ENCODE measurements at regions of chr3 and their contacts with region 1.

Region 1: DNA sequence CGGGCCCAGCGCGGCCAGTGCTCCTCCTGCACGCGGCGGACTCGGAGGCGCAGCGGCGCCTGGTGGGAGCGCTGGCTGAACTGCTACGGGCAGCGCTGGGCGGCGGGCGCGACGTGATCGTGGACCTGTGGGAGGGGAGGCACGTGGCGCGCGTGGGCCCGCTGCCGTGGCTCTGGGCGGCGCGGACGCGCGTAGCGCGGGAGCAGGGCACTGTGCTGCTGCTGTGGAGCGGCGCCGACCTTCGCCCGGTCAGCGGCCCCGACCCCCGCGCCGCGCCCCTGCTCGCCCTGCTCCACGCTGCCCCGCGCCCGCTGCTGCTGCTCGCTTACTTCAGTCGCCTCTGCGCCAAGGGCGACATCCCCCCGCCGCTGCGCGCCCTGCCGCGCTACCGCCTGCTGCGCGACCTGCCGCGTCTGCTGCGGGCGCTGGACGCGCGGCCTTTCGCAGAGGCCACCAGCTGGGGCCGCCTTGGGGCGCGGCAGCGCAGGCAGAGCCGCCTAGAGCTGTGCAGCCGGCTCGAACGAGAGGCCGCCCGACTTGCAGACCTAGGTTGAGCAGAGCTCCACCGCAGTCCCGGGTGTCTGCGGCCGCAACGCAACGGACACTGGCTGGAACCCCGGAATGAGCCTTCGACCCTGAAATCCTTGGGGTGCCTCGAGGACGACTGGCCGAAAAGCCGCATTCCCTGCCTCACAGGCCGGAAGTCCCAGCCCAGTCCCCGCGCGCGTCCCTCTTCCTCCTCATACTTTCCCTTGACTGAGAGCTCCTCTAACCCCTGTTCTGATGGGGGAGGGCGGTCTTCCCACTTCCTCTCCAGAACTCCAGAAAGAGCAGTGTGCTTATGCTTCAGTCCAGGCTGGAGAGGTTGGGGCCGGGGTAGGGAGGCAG is 1.4 kb upstream of the IL17RC start:
- DNase-seq: peak; percentile 36
- ATAC-seq: peak; percentile 61
- H3K4me3 Mint-ChIP-seq: peak overlapping the region; percentile 64
- H3K27ac Mint-ChIP-seq: no peak overlapping the region
- H3K4me1 Mint-ChIP-seq: peaks cover 20% of the 10 kb centered on the region
- H3K27me3 Mint-ChIP-seq: peaks cover 6% of the 10 kb centered on the region

Region 2: GRCh38 chr3:9837701-9838582 is 77.6 kb before region 1 on chr3:
- CTCF ChIA-PET with region 1: no interaction called
- POLR2A ChIA-PET with region 1: no interaction called
- DNase-seq: no peak
- ATAC-seq: no peak
- H3K4me3 Mint-ChIP-seq: no peak overlapping the region
- H3K27ac Mint-ChIP-seq: no peak overlapping the region
- H3K4me1 Mint-ChIP-seq: peaks cover 10% of the 10 kb centered on the region
- H3K27me3 Mint-ChIP-seq: no peaks in the 10 kb centered on the region

Region 3: DNA sequence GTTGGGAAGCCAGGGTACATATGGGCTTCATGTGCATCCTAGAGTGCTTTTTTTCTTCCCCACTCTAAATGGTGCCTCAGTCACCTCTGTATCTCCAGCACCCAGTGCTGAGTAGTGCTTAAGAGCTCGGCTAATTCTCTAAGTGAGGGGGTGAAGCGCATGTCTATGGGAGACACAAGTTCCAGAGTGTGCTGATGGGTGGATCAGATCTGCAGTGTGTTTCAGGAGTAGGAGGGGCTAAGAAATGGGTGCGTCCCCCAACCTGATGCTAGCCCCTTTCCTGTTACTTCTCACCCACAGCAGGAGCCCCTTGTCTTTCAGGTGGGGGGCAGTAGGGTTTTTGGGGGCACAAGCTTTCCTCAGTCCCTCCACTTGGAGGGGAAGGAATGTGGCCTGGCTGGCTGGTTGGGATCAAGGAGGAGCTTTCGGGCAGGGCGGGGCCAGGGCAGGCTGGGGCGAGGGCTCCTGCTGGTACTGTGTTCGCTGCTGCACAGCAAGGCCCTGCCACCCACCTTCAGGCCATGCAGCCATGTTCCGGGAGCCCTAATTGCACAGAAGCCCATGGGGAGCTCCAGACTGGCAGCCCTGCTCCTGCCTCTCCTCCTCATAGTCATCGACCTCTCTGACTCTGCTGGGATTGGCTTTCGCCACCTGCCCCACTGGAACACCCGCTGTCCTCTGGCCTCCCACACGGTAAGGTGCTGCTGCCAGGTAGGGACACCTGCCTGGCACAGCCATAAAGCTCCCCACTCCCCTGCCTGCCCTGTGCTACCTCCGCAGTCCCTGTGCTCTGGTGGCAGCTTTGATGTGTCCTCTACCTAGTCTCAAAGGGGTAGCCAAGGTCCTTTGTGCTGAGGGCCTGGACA is 12.9 kb before region 1 on chr3 and contains the start of gene IL17RE:
- CTCF ChIA-PET with region 1: interaction called, 11 read pairs
- POLR2A ChIA-PET with region 1: interaction called, 11 read pairs
- DNase-seq: peak; percentile 38
- ATAC-seq: peak; percentile 77
- H3K4me3 Mint-ChIP-seq: peak within 1 kb of the TSS; percentile 30
- H3K27ac Mint-ChIP-seq: peak within 1 kb of the TSS; percentile 83
- H3K4me1 Mint-ChIP-seq: peaks cover 35% of the 10 kb centered on the region
- H3K27me3 Mint-ChIP-seq: no peaks in the 10 kb centered on the region
- total RNA-seq, gene IL17RE: 1.3 to 1.8 TPM

Measured in activated CD8-positive, alpha-beta T cell treated with anti-CD3 and anti-CD28 coated beads, Interleukin-2, amount 10 ng/mL, durations not matched to agents 7 days and 5 days (primary cell).